ENCODE measurements at regions of chr16 and their contacts with region 1.

Region 1: GRCh38 chr16:20598832-20599469 is 22.8 kb upstream of the ACSM2B start:
- DNase-seq: no peak
- H3K4me3 Mint-ChIP-seq: no peak overlapping the region
- H3K27ac Mint-ChIP-seq: no peak overlapping the region
- H3K4me1 Mint-ChIP-seq: no peaks in the 10 kb centered on the region
- H3K27me3 Mint-ChIP-seq: peaks cover 5% of the 10 kb centered on the region

Region 2: DNA sequence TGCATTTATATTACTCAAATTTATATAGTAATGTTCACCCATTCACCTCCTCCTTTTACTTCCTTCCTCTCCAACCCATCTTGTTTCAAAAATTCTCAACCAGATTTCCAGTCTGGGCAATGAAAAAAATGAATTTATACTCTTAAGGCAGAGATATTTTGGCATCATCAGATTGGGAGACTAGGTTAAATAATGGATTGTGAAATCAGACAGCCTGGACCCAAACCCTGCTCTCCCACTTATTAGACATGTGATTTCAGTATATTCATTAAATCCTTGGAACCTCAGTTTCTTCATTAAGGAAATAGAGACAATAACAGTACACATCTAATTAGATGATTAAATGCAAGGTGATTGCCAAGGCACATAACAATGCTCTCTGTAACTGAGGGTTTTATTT is 90.7 kb after region 1 on chr16:
- CTCF ChIA-PET with region 1: no interaction called
- intact Hi-C with region 1: loop called (anchors 5 kb)
- DNase-seq: no peak
- H3K4me3 Mint-ChIP-seq: no peak overlapping the region
- H3K27ac Mint-ChIP-seq: no peak overlapping the region
- H3K4me1 Mint-ChIP-seq: no peaks in the 10 kb centered on the region
- H3K27me3 Mint-ChIP-seq: peaks cover 19% of the 10 kb centered on the region

Region 3: DNA sequence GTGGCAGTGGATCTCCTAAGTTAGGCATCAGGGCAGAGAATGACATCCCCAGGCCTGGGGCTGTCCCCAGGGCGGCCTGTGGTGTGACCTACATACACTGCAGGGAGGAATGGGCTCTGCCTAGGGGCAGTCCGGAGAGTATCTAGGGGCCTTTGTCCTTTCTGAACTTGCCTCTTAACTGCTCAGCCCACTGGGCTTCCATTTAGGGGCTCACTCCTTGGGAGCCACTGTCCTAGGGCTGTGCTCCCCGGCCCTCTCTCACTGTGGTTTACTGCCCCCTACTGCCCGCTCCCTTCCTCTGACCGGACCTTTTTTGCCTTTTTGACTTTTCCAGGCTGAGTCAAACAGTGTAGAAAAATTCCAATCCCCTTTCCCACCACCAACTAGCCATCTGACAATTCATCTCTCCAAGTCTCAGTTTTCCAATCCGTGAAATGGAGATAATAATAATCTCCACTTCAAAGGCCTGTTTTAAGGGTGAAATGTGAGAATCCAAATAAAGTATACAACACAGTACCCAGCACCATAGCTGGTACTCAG is 484.8 kb after region 1 on chr16:
- CTCF ChIA-PET with region 1: no interaction called
- intact Hi-C with region 1: loop called (anchors 5 kb)
- DNase-seq: peak; percentile 68
- H3K4me3 Mint-ChIP-seq: no peak overlapping the region
- H3K27ac Mint-ChIP-seq: no peak overlapping the region
- H3K4me1 Mint-ChIP-seq: no peaks in the 10 kb centered on the region
- H3K27me3 Mint-ChIP-seq: peaks cover 6% of the 10 kb centered on the region

Measured in activated naive CD4-positive, alpha-beta T cell treated with anti-CD3 and anti-CD28 coated beads for 36 hours (primary cell).